OCI-LY7 (cell line): ENCODE measurements at regions of chr11 and their contacts with region 1.

Region 1: DNA sequence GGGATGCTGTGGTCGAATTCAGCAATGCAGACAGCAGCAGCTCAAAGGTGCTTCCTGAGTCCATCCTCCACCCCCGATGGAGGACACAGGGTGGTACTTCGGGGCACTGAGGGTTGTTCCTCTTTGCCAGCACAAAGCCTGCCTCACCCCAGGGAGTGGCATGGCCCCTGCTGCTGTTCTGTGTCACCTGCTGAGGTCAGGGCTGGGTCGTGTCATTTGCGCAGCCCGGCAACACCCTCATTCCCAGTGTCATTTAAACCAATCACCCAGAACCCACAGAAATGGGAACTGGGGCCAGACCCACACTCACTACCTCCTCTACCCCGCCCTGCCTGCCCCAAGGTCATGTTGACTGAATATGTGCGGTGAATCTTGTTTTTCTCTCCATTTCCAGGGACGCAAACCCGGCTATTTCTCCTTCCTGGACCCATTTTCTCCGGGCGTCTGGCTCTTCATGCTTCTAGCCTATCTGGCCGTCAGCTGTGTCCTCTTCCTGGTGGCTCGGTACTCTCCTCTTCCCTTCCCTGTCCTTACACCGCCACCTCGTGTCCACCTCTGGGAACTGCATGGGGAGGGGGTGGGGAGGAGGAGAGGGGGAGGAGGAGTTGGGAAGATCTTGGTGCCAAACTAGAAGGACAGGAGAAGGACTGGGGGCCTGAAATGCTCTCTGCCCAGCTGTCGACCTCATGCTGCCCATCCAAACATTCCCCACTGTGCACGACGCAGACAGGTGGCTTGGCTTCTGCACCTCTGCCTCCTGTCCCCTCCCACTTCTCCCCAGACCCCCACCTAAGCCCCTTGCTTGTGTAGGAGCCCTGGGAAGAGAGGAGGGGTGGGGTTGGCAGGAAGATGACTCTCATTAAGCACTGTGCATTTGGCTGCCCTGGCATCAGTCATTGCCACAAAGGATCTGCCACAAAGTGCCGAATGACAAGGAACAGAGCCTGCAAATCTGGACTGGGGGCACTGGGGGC is 71.2 kb upstream of the TBCEL start:
- DNase-seq: peak; percentile 76
- H3K4me3 ChIP-seq: peak overlapping the region; percentile 43
- H3K27ac ChIP-seq: no peak overlapping the region
- H3K4me1 ChIP-seq: peaks cover 14% of the 10 kb centered on the region
- CTCF ChIP-seq: peak; percentile 90

Region 2: GRCh38 chr11:120335908-120336640 is 616.7 kb before region 1 on chr11 and contains the start of gene ARHGEF12:
- CTCF ChIA-PET with region 1: no interaction called
- POLR2A ChIA-PET with region 1: no interaction called
- intact Hi-C with region 1: loop called (anchors 2 kb)
- DNase-seq: peak; percentile 94
- H3K4me3 ChIP-seq: peak within 1 kb of the TSS; percentile 79
- H3K27ac ChIP-seq: no peak within 1 kb of the TSS
- H3K4me1 ChIP-seq: peaks cover 31% of the 10 kb centered on the region
- CTCF ChIP-seq: peak; percentile 83
- total RNA-seq, gene ARHGEF12: 16.1 and 22.4 TPM in 2 replicates

Region 3: DNA sequence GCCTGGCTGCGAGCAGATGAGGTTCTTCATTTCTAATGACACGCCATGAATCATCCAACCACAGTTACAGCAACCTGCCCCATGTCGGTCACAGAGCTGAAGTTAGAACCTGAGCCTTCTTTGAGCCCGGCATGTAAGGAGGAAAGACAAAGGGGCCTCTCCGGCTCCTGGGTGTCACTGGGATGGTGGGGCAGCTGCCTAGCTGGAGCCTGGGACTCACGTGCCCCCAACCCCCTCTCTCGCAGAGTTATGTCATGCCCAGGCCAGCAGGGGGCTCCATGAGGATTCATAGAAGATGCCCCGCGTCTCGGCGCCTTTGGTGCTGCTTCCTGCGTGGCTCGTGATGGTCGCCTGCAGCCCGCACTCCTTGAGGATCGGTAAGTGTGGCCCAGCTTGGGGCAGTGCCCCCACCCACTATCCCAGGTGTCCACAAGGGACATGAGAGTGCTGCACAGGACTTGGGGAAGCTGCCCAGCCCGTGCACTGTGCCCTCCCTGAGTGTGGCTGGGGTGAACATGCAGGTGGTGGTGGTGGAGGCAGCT is 292.7 kb before region 1 on chr11:
- CTCF ChIA-PET with region 1: no interaction called
- POLR2A ChIA-PET with region 1: no interaction called
- intact Hi-C with region 1: loop called (anchors 10 kb)
- DNase-seq: peak; percentile 82
- H3K4me3 ChIP-seq: no peak overlapping the region
- H3K27ac ChIP-seq: no peak overlapping the region
- H3K4me1 ChIP-seq: peaks cover 33% of the 10 kb centered on the region
- CTCF ChIP-seq: peak; percentile 84

Region 4: GRCh38 chr11:120912504-120912903 is 40.2 kb before region 1 on chr11:
- CTCF ChIA-PET with region 1: no interaction called
- POLR2A ChIA-PET with region 1: no interaction called
- intact Hi-C with region 1: loop called (anchors 1 kb)
- DNase-seq: peak; percentile 46
- H3K4me3 ChIP-seq: no peak overlapping the region
- H3K27ac ChIP-seq: no peak overlapping the region
- H3K4me1 ChIP-seq: no peaks in the 10 kb centered on the region
- CTCF ChIP-seq: peak; percentile 72

Region 5: DNA sequence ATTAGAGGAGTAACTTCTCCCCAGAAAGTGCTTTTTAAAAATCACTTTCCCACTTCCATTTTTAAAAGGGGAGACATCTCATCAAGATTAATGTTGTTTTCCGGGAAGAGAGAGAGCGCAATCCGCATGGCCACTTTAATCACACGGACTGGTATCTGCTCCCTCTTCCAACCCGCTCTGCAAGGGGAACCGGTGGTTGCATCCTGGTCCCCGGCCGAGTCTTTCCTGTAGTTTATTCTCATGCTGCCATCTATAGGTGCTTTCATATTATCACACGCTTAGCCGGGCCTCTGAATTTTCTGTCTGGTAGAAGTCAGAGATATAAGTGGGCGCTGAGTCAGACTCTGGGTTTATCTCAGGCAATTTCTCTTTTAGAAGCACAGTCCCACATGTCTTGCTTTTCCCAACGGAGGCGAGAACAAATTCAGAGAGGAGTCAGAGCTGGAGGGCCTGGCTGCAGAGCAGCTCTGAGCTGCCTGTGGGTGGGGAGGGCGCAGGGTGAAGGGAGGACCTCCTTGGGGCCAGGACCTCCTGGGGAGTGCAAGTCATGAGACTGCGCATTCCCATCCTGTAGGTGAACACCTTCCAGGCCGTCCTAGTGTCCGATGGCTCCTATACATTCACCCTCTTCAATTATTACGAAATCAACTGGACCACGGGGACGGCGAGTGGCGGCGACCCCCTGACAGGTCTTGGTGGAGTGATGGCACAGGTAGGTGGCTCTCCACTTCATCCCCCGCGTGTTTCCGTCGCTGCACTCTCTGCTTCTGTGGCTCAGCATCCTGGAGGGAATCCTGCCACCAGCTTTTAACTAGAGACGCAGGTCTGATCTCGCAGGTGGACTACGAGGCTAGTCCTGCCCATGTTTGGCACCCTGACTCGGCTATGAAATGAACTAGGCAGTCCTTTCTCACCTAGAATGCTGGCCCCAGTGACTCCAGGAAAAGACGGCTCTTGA is 160.0 kb after region 1 on chr11:
- CTCF ChIA-PET with region 1: no interaction called
- POLR2A ChIA-PET with region 1: no interaction called
- intact Hi-C with region 1: loop called (anchors 10 kb)
- DNase-seq: peak; percentile 41
- H3K4me3 ChIP-seq: no peak overlapping the region
- H3K27ac ChIP-seq: no peak overlapping the region
- H3K4me1 ChIP-seq: no peaks in the 10 kb centered on the region
- CTCF ChIP-seq: peak; percentile 77

Region 6: GRCh38 chr11:121153472-121153871 is 200.7 kb after region 1 on chr11:
- CTCF ChIA-PET with region 1: no interaction called
- POLR2A ChIA-PET with region 1: no interaction called
- intact Hi-C with region 1: no loop called
- DNase-seq: no peak
- H3K4me3 ChIP-seq: no peak overlapping the region
- H3K27ac ChIP-seq: no peak overlapping the region
- H3K4me1 ChIP-seq: no peaks in the 10 kb centered on the region
- CTCF ChIP-seq: peak; percentile 60

Region 7: DNA sequence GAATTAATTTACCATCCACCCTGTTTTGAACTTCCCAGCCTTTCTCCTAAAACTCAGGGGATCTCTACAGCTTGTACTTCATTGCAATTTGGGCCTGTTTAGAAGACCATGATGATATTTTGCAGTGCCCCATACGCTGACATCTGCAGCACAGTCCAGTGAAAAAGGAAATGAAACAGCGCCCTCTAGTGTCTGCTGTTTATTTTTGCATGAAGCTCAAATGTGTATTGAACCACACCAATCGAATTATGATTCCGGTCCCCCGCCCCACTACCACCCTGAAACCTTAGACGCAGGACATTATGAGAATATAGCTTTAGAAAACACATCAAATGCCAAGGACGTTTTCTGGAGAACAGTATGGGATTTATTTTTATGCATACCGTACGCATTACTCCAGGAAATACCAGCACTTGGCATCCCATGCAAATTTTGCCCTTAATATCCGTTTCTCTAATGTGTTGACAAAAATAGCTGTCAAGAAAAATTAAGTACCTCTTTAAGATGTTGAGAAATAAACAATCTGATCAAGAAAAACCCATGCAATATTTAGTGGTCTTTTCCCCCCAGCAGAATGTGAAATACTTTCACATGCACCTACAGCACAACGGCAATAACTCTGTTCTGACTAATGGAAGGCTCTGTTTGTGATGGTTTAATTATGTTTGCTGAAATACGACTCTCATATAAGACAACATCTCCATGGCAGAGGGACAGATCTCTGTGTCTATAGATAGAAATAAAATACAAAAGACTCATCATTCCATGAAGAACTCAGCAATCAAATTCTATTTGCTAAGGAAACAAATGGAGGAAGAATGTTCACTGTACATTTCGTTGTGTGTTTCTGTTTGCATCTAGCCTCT is 242.2 kb after region 1 on chr11:
- CTCF ChIA-PET with region 1: no interaction called
- POLR2A ChIA-PET with region 1: no interaction called
- intact Hi-C with region 1: loop called (anchors 10 kb)
- DNase-seq: peak; percentile 74
- H3K4me3 ChIP-seq: no peak overlapping the region
- H3K27ac ChIP-seq: no peak overlapping the region
- H3K4me1 ChIP-seq: peaks cover 5% of the 10 kb centered on the region
- CTCF ChIP-seq: peak; percentile 98